ENCODE measurements at regions of chr16 and their contacts with region 1.

Region 1: DNA sequence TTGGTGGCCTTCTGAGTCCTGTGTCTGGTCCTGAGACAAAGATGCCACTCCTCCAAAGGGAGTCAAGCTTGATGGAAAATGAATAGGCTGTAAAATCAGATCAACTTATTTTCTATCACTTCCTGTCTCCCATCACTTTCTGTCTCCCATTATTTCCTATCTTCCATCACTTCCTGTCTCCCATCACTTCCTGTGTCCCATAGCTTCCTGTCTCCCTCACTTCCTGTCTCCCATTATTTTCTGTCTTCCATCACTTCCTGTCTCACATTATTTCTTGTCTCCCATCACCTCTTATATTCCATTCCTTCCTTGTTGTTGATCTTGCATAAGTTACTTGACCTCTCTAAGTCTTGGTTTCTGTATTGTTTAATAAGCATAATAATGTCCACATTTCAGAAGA is 418.5 kb upstream of the EEF2KMT start:
- DNase-seq: no peak
- H3K4me3 ChIP-seq: no peak overlapping the region
- CTCF ChIP-seq: no peak

Region 2: DNA sequence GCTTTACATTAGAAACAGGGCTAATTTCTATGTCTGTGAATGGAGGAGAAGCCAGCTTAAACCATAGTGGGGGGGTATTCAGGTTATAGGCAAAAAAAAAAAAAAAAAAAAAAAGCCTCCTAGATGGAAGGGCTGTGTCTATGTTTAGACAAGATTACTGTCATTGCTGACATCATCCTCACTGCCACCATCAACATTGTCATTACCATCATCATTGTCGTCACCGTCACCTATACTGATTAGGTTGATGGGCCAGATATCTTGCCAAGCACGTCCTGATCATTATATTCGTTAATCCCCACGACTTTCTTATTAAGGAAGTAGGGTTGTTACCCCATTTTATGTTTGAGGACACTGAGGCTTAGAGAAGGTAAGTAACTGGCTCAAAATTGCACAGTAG is 51.4 kb after region 1 on chr16:
- in situ Hi-C with region 1: loop called (anchors 5 kb)
- DNase-seq: no peak
- H3K4me3 ChIP-seq: no peak overlapping the region
- CTCF ChIP-seq: no peak

Region 3: GRCh38 chr16:5604770-5605169 is 88.7 kb after region 1 on chr16:
- in situ Hi-C with region 1: no loop called
- DNase-seq: peak; percentile 19
- H3K4me3 ChIP-seq: no peak overlapping the region
- CTCF ChIP-seq: peak; percentile 20

Region 4: GRCh38 chr16:7171151-7171550 is 1655.0 kb after region 1 on chr16:
- in situ Hi-C with region 1: no loop called
- DNase-seq: no peak
- H3K4me3 ChIP-seq: no peak overlapping the region
- CTCF ChIP-seq: no peak

Measured in astrocyte of the cerebellum (primary cell).